CD8-positive, alpha-beta T cell (primary cell): ENCODE measurements at regions of chr18 and their contacts with region 1.

Region 1: GRCh38 chr18:3771121-3771971 is 321.4 kb downstream of the TGIF1 start:
- DNase-seq: peak; percentile 40 to 81 (median 68)
- ATAC-seq: peak; percentile 99
- H3K4me3 ChIP-seq: peak overlapping the region; percentile 14 to 27
- H3K4me3 Mint-ChIP-seq: peak overlapping the region; percentile 58
- H3K27ac ChIP-seq: no peak overlapping the region
- H3K27ac Mint-ChIP-seq: no peak overlapping the region
- H3K4me1 ChIP-seq: peaks cover 5% of the 10 kb centered on the region
- H3K4me1 Mint-ChIP-seq: peaks cover 12% of the 10 kb centered on the region
- H3K27me3 ChIP-seq: peaks cover 0 to 3% of the 10 kb centered on the region in 2 experiments
- H3K27me3 Mint-ChIP-seq: peaks cover 20% of the 10 kb centered on the region
- CTCF ChIP-seq: peak; percentile 70

Region 2: DNA sequence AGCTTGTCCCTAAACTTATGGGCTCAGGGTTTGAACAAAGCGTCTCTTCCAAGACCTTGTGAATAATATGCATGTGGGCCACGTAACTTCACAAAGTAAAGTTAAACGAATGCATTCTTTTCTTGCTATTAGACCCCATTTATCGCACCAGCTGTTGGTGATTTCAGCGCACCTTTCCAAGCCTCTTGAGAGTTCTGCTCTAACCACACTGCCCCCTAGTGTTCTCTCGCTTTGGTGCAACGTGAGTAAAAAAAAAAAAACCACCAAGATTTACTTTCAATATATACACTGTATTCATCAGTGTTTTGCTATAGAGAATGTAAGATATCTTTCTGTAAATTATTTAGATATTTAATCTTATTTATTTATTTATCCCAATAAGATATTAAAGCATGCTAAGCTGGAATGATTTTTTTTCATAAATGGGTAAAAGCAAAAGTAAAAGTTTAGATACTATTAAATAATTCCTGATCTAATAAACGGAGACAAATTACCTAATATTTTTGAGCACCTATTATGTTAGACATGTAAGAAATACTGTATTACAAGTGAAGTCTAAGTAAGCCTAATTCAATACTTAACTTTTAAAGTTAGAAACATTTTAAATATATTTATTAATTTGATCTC is 224.2 kb after region 1 on chr18:
- CTCF ChIA-PET with region 1: interaction called, 11 read pairs
- POLR2A ChIA-PET with region 1: no interaction called
- intact Hi-C with region 1: loop called in 1 of 2 experiments (anchors 2 kb)
- DNase-seq: peak; percentile 3 to 71 (median 46)
- ATAC-seq: peak; percentile 55
- H3K4me3 ChIP-seq: no peak overlapping the region
- H3K4me3 Mint-ChIP-seq: no peak overlapping the region
- H3K27ac ChIP-seq: no peak overlapping the region
- H3K27ac Mint-ChIP-seq: no peak overlapping the region
- H3K4me1 ChIP-seq: no peaks in the 10 kb centered on the region
- H3K4me1 Mint-ChIP-seq: no peaks in the 10 kb centered on the region
- H3K27me3 ChIP-seq: no peaks in the 10 kb centered on the region
- H3K27me3 Mint-ChIP-seq: peaks cover 3% of the 10 kb centered on the region
- CTCF ChIP-seq: peak; percentile 78

Region 3: DNA sequence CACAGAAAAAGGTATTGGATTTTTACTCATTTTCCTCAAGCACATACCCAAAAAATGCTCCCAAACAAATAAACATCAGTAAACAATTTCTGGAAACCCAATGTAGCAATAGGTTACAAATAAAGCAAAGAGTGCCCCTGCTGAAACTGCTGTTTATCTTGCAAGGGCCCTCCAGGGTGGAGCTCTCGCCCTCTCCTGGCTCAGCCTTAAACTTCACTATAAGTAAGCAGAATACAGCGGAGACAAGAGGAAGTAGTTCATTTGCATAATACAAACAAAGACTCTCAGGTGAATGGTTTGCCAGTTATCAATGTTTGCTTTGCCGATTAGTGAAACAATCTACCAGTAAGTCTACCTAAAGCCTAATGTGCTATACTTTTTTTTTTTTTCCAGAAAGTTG is 246.1 kb after region 1 on chr18:
- CTCF ChIA-PET with region 1: no interaction called
- POLR2A ChIA-PET with region 1: no interaction called
- intact Hi-C with region 1: no loop called
- DNase-seq: no peak
- ATAC-seq: no peak
- H3K4me3 ChIP-seq: no peak overlapping the region
- H3K4me3 Mint-ChIP-seq: no peak overlapping the region
- H3K27ac ChIP-seq: no peak overlapping the region
- H3K27ac Mint-ChIP-seq: no peak overlapping the region
- H3K4me1 ChIP-seq: no peaks in the 10 kb centered on the region
- H3K4me1 Mint-ChIP-seq: no peaks in the 10 kb centered on the region
- H3K27me3 ChIP-seq: no peaks in the 10 kb centered on the region
- H3K27me3 Mint-ChIP-seq: peaks cover 2% of the 10 kb centered on the region
- CTCF ChIP-seq: no peak

Region 4: GRCh38 chr18:4068552-4069158 is 297.3 kb after region 1 on chr18:
- CTCF ChIA-PET with region 1: interaction called, 4 read pairs
- POLR2A ChIA-PET with region 1: no interaction called
- intact Hi-C with region 1: loop called (anchors 1 to 2 kb)
- DNase-seq: peak in 6 of 9 experiments; percentile 3 to 43 (median 12)
- ATAC-seq: no peak
- H3K4me3 ChIP-seq: no peak overlapping the region
- H3K4me3 Mint-ChIP-seq: no peak overlapping the region
- H3K27ac ChIP-seq: no peak overlapping the region
- H3K27ac Mint-ChIP-seq: no peak overlapping the region
- H3K4me1 ChIP-seq: no peaks in the 10 kb centered on the region
- H3K4me1 Mint-ChIP-seq: no peaks in the 10 kb centered on the region
- H3K27me3 ChIP-seq: no peaks in the 10 kb centered on the region
- H3K27me3 Mint-ChIP-seq: peaks cover 9% of the 10 kb centered on the region
- CTCF ChIP-seq: peak; percentile 62

Region 5: DNA sequence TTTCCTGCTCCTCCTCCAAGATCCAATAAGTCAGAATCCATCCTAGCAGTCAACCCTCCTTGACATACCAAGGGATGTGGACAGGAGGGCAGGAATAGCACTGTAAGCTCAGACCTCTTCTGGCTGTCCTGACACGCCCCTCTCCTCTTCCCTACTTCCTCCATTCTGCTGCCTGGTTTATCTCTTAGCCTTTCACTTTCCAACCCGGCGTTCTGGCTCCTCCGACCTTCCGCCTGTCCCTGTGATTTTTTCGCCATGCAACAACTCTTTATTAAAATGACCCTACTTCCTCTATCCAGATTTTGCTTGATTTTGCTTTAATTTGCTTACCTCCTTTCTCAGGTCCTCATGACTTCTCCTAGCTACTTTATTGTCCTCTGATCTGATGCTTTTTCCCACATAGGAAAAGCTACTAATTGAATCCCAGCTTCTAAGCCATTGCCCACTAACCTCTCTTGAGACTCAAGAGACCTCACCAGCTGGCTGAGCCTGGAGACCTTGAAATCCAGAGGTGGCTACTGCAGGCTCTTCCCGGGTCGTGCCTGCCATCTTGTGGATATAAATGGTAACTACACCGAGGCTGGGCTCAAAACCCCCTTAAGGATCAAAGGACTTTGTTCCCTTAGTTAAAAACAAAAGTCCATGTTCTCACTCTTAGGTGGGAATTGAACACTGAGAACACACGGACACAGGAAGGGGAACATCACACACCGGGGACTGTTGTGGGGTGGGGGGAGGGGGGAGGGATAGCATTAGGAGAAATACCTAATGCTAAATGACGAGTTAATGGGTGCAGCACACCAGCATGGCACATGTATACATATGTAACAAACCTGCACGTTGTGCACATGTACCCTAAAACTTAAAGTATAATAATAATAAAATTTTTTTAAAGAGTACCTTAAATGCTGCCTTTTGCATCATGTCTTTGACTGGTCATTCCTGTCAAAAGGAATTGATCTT is 1286.3 kb after region 1 on chr18:
- CTCF ChIA-PET with region 1: no interaction called
- POLR2A ChIA-PET with region 1: no interaction called
- intact Hi-C with region 1: loop called in 1 of 2 experiments (anchors 2 kb)
- DNase-seq: peak in 8 of 9 experiments; percentile 16 to 68 (median 48)
- ATAC-seq: no peak
- H3K4me3 ChIP-seq: no peak overlapping the region
- H3K4me3 Mint-ChIP-seq: no peak overlapping the region
- H3K27ac ChIP-seq: no peak overlapping the region
- H3K27ac Mint-ChIP-seq: no peak overlapping the region
- H3K4me1 ChIP-seq: peaks cover 14% of the 10 kb centered on the region
- H3K4me1 Mint-ChIP-seq: peaks cover 23% of the 10 kb centered on the region
- H3K27me3 ChIP-seq: no peaks in the 10 kb centered on the region
- H3K27me3 Mint-ChIP-seq: no peaks in the 10 kb centered on the region
- CTCF ChIP-seq: peak; percentile 68